Dorsolateral prefrontal cortex (tissue), 120 donors: ENCODE measurements at regions of chr1 and their contacts with region 1.

Region 1: DNA sequence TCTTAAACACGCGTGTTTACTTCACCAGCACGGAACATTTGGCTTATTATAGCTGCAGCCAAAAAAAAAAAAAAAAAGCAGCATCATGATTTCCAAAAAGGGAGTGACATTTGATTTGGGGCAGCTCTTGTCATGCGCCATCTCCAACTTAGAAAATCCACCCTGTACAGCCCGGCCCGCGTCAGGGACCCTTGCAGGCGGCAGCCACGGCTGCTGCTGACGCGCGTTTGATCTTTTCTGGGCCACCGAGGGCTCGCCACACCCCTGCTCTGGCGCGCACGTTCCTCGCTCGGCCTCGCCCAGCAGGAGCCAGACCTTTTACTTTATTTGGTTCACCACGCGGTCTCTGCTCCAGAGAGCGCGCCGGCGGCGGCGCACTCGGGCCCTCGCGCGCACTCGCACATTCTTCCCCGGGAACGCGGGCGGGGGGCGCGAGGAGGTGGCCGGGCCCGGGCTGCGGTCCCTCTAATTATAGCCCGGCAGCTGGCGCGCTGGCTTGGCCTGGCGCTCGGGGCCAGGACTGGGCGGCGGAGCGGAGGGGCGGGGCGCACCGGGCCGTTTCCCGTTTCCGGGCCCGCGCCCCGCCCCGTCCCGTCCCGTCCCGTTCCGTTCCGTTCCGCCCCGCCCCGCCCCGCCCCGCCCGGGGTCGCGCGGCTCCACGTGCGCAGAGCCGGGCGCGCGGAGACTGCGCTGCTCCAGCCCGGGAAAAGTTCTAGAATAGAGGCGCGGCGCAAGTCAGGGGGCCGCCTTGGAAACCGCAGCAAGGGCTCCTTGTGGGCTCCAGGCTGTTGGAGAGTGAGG is 10.2 kb downstream of the IRF2BP2 start:
- DNase-seq: peak; percentile 67 to 86 (median 75)
- H3K4me3 ChIP-seq: peak overlapping the region; percentile 35 to 91 (median 67)
- H3K27ac ChIP-seq: peak overlapping the region; percentile 92 to 100 (median 99)
- H3K27me3 ChIP-seq: no peaks in the 10 kb centered on the region
- CTCF ChIP-seq: peak in 40 of 56 donors; percentile 10 to 59 (median 35)

Region 2: DNA sequence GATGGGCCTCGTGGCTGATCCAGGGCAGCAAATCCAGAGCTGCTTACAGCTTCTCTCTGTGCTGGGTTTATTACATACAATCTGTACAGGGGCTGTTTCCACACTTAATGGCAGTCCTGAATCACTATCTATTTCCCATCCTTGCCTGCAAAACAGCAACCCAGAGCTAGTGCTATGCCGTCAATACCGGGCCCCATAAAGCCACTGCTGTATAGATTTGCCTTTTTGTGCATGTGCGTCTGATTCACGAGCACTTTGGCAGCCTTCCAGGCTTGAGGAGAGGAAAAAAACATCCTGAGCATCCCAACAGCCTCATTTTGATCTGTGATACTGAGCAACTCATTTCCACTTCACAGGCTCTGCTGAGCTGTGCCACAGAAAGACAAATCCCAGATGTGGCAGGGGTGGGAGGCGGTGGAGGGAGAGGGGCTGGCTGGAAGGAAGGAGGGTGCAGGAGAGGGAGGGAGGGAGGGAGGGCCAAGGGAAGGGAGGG is 55.7 kb before region 1 on chr1:
- intact Hi-C with region 1: loop called (anchors 2 kb)
- DNase-seq: peak; percentile 54 to 84 (median 74)
- H3K4me3 ChIP-seq: peak overlapping the region in 8 of 59 donors; percentile 1 to 31 (median 17)
- H3K27ac ChIP-seq: peak overlapping the region; percentile 86 to 99 (median 97)
- H3K27me3 ChIP-seq: no peaks in the 10 kb centered on the region
- CTCF ChIP-seq: no peak

Region 3: GRCh38 chr1:234554698-234555311 is 45.0 kb before region 1 on chr1:
- intact Hi-C with region 1: loop called in 1 of 2 experiments (anchors 5 kb)
- DNase-seq: no peak
- H3K4me3 ChIP-seq: no peak overlapping the region
- H3K27ac ChIP-seq: peak overlapping the region in 52 of 59 donors; percentile 2 to 99 (median 83)
- H3K27me3 ChIP-seq: no peaks in the 10 kb centered on the region
- CTCF ChIP-seq: no peak